Activated naive CD4-positive, alpha-beta T cell treated with anti-CD3 and anti-CD28 coated beads for 36 hours (primary cell): ENCODE measurements at regions of chr1 and their contacts with region 1.

Region 1: DNA sequence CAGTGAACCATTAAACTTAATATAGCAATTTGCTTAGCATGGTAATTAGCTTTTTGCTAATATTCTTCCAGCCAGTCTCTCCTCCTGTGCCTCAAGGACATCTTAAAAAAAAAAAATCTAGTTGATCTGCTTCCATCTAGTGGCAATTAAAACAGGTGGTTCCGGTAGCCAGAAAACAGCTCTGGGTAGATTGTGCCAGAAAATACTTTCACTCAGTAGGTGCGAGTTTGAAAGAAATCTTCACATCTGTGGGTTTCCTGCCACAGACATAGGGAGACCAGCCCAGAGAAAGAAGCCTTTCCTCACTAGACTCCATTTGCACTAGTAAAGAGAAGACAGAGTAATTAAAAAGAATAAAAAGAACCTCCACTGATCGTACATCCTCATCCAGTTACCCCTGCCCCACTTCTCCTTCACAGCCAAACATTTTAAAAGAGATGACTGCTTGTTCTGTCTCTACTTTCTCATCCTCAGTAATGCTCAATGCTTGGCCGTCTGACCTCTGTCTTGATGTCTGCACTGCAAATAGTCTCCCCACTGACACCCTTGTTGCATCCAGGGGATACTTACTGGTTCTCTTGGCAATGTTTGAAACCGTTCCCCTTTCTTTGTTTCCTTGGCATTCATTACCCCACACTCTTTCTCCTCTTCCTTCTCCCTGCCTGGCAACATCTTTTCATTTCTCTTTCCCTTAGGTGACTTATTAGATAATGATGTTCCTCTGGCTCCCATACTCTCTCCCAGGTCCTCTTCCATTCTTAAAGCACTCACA is 16.9 kb downstream of the SELL start:
- DNase-seq: peak; percentile 59
- H3K4me3 Mint-ChIP-seq: peak overlapping the region; percentile 32
- H3K27ac Mint-ChIP-seq: peak overlapping the region; percentile 94
- H3K4me1 Mint-ChIP-seq: peaks cover 96% of the 10 kb centered on the region
- H3K27me3 Mint-ChIP-seq: no peaks in the 10 kb centered on the region

Region 2: DNA sequence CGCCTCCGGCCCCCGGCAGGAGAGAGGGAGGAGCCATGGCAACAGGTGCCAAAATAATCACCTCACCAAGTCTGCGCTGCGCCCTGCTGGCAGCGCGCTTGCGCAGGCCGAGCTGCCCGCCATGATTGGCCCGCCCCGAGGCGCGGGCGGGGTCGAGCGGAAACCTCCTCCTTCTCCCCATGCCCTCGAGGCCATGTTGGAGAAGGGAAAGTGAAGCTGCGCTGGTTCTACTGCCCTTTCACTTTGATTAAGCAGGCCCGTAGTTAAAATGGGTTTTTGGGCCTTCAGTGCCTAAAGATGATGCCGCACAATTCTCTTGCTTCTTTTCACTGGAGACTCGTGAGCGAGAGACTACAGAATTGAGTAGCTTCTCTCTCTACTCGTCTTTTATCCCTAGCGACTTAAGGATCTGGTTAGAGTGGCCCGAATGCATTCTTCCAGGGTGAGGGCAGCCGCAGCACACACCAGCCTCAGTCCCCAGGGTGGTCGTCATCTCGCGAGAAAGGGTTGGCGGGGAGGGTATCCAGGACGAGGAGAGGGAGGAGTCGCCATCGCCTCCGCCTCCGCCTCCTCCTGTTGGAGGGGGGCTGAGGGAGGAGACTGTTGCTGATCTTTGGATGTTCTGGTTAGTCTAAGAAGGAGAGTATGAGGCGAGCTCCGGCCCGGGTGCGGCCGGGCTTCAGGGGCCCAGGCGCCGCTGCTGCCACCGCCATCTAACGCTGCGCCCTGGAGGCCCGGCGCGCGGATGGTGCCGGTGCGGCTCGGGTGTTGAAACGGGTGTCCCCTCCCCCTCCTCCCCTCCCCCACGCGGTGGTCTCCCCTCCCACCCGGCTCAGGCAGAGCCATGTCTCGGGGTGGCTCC is 1758.2 kb before region 1 on chr1 and contains the start of gene DCAF6:
- CTCF ChIA-PET with region 1: no interaction called
- intact Hi-C with region 1: loop called (anchors 5 kb)
- DNase-seq: peak; percentile 97
- H3K4me3 Mint-ChIP-seq: peak within 1 kb of the TSS; percentile 85
- H3K27ac Mint-ChIP-seq: peak within 1 kb of the TSS; percentile 100
- H3K4me1 Mint-ChIP-seq: peaks cover 32% of the 10 kb centered on the region
- H3K27me3 Mint-ChIP-seq: no peaks in the 10 kb centered on the region
- total RNA-seq, gene DCAF6: 15.4 to 15.9 TPM

Region 3: GRCh38 chr1:169106095-169106920 is 588.2 kb before region 1 on chr1 and contains the start of gene ATP1B1:
- CTCF ChIA-PET with region 1: no interaction called
- intact Hi-C with region 1: loop called (anchors 10 kb)
- DNase-seq: peak; percentile 78
- H3K4me3 Mint-ChIP-seq: peak within 1 kb of the TSS; percentile 77
- H3K27ac Mint-ChIP-seq: peak within 1 kb of the TSS; percentile 16
- H3K4me1 Mint-ChIP-seq: peaks cover 43% of the 10 kb centered on the region
- H3K27me3 Mint-ChIP-seq: peaks cover 15% of the 10 kb centered on the region
- total RNA-seq, gene ATP1B1: 5.6 to 6.2 TPM

Region 4: DNA sequence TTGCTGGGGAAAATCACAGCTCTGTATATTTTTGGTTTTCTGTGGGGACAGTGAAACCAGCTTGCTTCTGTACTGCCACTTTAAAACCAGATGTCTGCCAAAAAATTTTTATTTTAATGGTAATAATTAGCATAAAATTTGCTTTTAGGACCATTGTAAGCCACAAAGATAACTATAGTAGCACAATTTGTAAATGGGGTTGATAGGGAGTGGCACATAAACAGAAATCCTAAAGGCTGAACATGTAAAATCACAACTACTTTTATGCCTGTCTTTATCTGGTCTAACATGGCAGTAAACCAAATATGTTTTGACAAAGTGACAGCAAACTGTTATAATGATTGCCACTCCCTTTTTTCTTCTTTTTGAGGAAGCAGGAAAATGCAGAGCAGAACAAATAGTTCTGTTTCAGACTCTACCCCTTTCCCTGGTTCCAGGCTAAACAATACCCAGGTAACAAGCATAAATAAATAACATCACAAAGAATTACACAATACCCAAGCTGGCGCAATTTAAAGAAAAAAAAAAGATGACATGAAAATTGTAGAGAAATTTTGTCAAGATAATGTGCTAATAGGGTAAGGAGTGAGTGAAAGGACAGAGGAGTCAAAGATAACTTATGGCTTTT is 243.2 kb before region 1 on chr1:
- CTCF ChIA-PET with region 1: no interaction called
- intact Hi-C with region 1: no loop called
- DNase-seq: no peak
- H3K4me3 Mint-ChIP-seq: no peak overlapping the region
- H3K27ac Mint-ChIP-seq: no peak overlapping the region
- H3K4me1 Mint-ChIP-seq: peaks cover 2% of the 10 kb centered on the region
- H3K27me3 Mint-ChIP-seq: peaks cover 5% of the 10 kb centered on the region

Region 5: DNA sequence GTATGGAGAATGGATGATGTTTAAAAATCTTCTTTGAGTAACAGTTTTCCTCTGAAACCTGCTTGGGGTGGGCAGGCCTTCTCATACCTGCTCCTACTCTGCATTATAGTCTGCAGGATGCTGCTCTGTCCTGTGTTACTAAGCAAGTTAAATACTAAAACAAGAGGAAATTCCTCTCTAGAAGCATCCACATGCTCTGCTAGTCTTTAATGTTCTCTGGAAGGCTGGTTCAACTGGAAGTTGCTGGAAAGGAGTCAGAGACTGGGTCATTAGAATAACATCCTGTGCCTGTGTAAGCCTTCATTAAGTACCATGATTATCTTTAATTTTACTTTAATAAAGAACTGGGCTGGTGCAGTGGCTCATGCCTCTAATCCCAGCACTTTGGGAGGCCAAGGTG is 70.4 kb before region 1 on chr1:
- CTCF ChIA-PET with region 1: interaction called, 7 read pairs
- intact Hi-C with region 1: loop called (anchors 1 kb)
- DNase-seq: no peak
- H3K4me3 Mint-ChIP-seq: no peak overlapping the region
- H3K27ac Mint-ChIP-seq: peak overlapping the region; percentile 89
- H3K4me1 Mint-ChIP-seq: peaks cover 69% of the 10 kb centered on the region
- H3K27me3 Mint-ChIP-seq: no peaks in the 10 kb centered on the region

Region 6: GRCh38 chr1:169670836-169671235 is 23.7 kb before region 1 on chr1:
- CTCF ChIA-PET with region 1: interaction called, 7 read pairs
- intact Hi-C with region 1: loop called (anchors 1 kb)
- DNase-seq: no peak
- H3K4me3 Mint-ChIP-seq: no peak overlapping the region
- H3K27ac Mint-ChIP-seq: peak overlapping the region; percentile 62
- H3K4me1 Mint-ChIP-seq: peaks cover 60% of the 10 kb centered on the region
- H3K27me3 Mint-ChIP-seq: no peaks in the 10 kb centered on the region

Region 7: DNA sequence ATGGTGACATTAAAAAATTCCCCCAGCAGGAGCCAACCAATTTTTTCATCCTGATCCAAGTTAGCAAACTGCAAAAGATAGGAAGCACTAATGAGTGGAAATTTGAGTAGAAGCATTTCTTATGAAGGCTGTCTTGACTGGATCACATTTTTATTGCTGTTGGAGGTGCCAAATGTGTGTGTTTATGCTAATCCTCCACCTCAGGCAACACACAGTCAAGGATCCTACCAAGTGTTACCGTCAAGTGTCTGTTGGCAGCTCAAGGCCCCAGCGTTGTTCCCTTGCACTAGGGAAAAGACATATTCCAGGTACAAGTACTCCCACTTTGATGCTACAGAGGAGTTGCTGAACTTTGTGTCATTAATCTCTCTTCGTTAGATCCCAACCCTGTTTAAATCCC is 82.0 kb after region 1 on chr1:
- CTCF ChIA-PET with region 1: no interaction called
- intact Hi-C with region 1: no loop called
- DNase-seq: no peak
- H3K4me3 Mint-ChIP-seq: no peak overlapping the region
- H3K27ac Mint-ChIP-seq: no peak overlapping the region
- H3K4me1 Mint-ChIP-seq: no peaks in the 10 kb centered on the region
- H3K27me3 Mint-ChIP-seq: no peaks in the 10 kb centered on the region